Activated CD4-positive, alpha-beta T cell treated with anti-CD3 and anti-CD28 coated beads, Interleukin-2, amount 10 ng/mL, durations not matched to agents 24 days and 14 days (primary cell): ENCODE measurements at regions of chr19 and their contacts with region 1.

Region 1: GRCh38 chr19:39557441-39558151 is 17.6 kb upstream of the EID2 start:
- DNase-seq: peak; percentile 69
- H3K4me3 Mint-ChIP-seq: peak overlapping the region; percentile 72
- H3K27ac Mint-ChIP-seq: peak overlapping the region; percentile 85
- H3K4me1 Mint-ChIP-seq: peaks cover 32% of the 10 kb centered on the region
- H3K27me3 Mint-ChIP-seq: no peaks in the 10 kb centered on the region

Region 2: DNA sequence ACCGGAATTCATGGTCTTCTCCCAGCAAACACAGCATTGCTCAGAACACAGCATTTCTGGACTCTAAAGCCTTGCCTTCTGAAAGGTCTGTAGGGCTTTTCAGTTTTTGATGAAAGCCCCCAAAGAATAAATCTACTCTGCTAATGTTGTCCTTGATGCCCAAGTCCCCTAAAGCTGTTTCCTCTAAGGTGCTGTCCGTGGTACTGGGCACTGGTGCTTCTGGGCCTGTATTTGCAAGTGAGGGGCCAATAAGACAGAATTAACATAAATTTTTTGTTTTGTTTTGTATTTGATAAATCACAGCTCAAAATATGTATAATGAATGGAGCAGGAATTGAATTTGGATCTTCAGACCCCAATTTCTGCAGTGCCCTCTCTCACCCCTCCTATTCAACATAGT is 32.7 kb after region 1 on chr19:
- intact Hi-C with region 1: no loop called
- DNase-seq: no peak
- H3K4me3 Mint-ChIP-seq: no peak overlapping the region
- H3K27ac Mint-ChIP-seq: no peak overlapping the region
- H3K4me1 Mint-ChIP-seq: no peaks in the 10 kb centered on the region
- H3K27me3 Mint-ChIP-seq: no peaks in the 10 kb centered on the region

Region 3: DNA sequence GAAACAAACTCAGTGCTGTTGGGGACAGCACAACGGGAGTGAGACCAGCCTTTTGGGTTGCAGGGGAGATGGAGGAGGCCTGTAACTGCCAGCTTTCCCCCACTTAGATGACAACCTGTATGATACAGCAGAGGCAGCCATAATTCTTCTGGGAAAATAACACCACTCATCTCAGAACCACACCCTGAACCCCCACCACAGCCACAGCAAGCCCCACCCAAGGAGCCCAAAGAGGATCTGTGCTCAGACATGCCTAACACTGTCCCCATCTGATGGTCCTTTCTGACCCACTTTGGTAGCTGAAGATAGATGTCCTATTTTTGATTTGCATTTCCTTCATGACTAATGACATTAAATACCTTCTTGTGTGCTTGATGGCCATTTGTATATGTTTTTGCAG is 60.1 kb after region 1 on chr19:
- intact Hi-C with region 1: no loop called
- DNase-seq: no peak
- H3K4me3 Mint-ChIP-seq: no peak overlapping the region
- H3K27ac Mint-ChIP-seq: no peak overlapping the region
- H3K4me1 Mint-ChIP-seq: no peaks in the 10 kb centered on the region
- H3K27me3 Mint-ChIP-seq: peaks cover 27% of the 10 kb centered on the region

Region 4: DNA sequence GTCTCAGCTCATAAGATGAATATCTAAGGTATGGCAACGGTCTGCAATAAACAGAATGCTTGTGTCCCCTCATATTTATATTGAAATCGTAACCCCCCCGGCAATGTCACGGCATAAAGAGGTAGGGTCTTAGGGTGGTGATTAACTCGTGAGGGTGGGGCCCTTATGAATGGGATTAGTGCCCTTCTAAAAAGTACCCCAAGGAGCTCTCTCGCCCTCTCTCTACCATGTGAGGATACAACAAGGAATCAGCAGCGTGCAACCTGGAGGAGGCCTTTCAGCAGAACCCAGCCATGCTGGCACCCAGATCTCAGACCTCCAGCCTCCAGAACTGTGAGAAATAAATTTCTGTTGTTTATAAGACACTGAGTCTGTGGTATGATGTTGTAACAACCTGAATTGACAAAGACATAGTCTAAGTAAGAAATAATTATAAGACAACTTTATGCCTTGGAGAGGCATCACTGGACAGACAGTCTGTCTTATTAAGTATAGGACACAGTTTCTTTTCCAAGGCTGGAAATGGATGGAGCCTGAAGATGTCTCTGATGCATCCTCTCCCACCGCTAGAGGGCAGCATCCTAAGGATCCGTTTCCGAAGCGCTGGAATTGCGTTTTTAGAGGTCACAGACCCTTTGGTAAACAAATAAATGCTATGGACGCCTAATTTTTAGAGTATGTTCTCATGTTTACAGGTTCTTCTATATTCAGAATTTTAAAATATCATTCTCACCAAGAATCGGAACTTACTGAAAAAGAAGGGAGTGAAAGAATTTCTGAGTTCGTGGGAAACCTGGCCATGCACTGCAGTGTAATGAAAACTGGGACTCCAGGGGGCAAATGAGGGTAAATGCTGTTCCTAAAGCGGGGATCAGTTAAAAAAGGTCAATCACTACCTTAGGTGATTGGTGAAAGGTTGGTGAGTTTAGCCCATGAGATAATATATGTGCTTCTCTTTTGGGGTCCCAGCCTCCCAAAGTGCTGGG is 207.8 kb after region 1 on chr19:
- intact Hi-C with region 1: loop called (anchors 10 kb)
- DNase-seq: peak; percentile 79
- H3K4me3 Mint-ChIP-seq: no peak overlapping the region
- H3K27ac Mint-ChIP-seq: no peak overlapping the region
- H3K4me1 Mint-ChIP-seq: peaks cover 4% of the 10 kb centered on the region
- H3K27me3 Mint-ChIP-seq: peaks cover 22% of the 10 kb centered on the region